Activated CD8-positive, alpha-beta T cell treated with anti-CD3 and anti-CD28 coated beads for 36 hours (primary cell): ENCODE measurements at regions of chr18 and their contacts with region 1.

Region 1: GRCh38 chr18:13216092-13216582 is 2.4 kb upstream of the LDLRAD4 start:
- DNase-seq: peak; percentile 76
- ATAC-seq: peak; percentile 58
- H3K4me3 Mint-ChIP-seq: peak overlapping the region; percentile 73
- H3K27ac Mint-ChIP-seq: peak overlapping the region; percentile 85
- H3K4me1 Mint-ChIP-seq: peaks cover 29% of the 10 kb centered on the region
- H3K27me3 Mint-ChIP-seq: peaks cover 13% of the 10 kb centered on the region
- CTCF ChIP-seq: peak; percentile 78

Region 2: DNA sequence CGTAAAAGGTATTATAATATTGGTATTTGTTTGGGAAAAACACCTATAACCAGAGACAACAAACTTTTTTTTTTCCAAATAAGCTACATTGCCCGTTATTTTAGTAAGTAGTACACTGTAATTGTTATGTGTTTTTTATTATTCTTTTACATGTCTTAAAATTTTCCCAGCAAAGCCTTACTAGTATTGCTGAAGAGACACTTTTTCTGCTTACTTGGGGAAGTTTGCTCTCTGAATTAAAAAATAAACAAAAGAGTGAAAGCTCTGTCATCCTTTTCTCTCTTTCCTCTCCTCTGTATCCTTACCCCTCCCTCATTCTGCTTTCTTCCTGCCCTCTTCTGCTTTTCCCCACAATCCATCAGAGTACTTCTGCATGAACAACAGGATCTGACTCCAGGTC is 23.2 kb before region 1 on chr18:
- CTCF ChIA-PET with region 1: no interaction called
- POLR2A ChIA-PET with region 1: no interaction called
- intact Hi-C with region 1: no loop called
- DNase-seq: no peak
- ATAC-seq: no peak
- H3K4me3 Mint-ChIP-seq: no peak overlapping the region
- H3K27ac Mint-ChIP-seq: no peak overlapping the region
- H3K4me1 Mint-ChIP-seq: peaks cover 2% of the 10 kb centered on the region
- H3K27me3 Mint-ChIP-seq: peaks cover 1% of the 10 kb centered on the region
- CTCF ChIP-seq: no peak

Region 3: DNA sequence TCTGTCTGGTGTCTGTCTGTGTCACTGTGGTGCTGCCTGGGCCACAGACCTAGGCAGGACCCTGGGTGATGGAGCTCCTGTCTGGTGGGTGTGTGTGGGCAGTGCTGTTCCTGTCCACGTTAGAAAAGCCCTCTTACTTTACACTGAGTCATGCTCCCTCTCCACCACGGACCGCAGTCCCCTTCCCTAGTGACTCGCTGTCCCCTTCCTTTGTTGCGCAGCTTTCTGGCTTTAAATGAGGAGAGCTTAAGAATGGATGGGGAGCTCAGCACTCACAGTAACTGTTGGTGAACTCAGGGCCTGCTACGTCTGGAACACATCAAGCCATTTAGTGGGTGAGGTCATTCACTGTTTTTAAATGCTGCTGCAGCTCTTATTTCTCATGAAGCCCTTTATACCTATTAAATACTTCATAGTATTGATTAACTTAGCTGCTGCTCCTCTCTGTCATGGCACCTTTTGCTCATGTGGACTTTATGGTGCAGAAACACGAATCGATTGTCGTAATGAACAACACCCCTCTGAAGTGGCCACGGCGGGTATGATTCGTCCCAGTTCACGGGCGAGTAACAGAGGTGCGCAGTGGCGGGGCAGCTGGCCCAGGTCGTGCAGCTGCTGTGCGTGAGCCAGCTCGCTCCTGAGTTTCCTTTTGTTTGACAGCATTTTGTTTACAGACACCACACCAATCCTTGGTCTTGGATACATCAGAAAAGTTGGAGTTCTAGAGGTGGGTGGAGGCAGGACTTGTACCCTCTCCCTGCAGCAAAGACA is 102.8 kb after region 1 on chr18:
- CTCF ChIA-PET with region 1: interaction called, 11 read pairs
- POLR2A ChIA-PET with region 1: no interaction called
- intact Hi-C with region 1: no loop called
- DNase-seq: peak; percentile 44
- ATAC-seq: peak; percentile 68
- H3K4me3 Mint-ChIP-seq: no peak overlapping the region
- H3K27ac Mint-ChIP-seq: no peak overlapping the region
- H3K4me1 Mint-ChIP-seq: peaks cover 26% of the 10 kb centered on the region
- H3K27me3 Mint-ChIP-seq: no peaks in the 10 kb centered on the region
- CTCF ChIP-seq: no peak

Region 4: GRCh38 chr18:13435596-13436327 is 219.6 kb after region 1 on chr18:
- CTCF ChIA-PET with region 1: interaction called, 12 read pairs
- POLR2A ChIA-PET with region 1: no interaction called
- intact Hi-C with region 1: no loop called
- DNase-seq: peak; percentile 37
- ATAC-seq: peak; percentile 21
- H3K4me3 Mint-ChIP-seq: no peak overlapping the region
- H3K27ac Mint-ChIP-seq: peak overlapping the region; percentile 87
- H3K4me1 Mint-ChIP-seq: peaks cover 57% of the 10 kb centered on the region
- H3K27me3 Mint-ChIP-seq: no peaks in the 10 kb centered on the region
- CTCF ChIP-seq: no peak

Region 5: DNA sequence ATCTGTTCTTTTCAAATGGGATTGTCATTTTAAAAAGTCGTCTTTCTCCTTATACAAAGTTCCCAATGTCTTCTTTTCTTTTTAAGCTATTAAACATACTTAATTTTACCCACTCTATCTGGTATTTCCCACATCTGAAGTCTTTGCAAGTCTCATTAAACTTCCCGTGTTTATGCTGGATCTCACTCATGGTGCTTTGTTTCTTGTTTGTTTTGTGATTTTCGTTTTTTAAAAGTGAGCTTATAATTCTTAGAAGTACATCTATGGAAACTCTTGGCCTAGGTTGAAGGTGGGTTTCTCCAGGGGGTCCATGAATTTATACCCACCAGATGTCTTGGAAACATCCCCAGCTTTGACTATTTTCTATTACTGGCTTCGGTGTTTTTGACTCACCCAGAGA is 302.2 kb after region 1 on chr18:
- CTCF ChIA-PET with region 1: interaction called, 11 read pairs
- POLR2A ChIA-PET with region 1: no interaction called
- intact Hi-C with region 1: no loop called
- DNase-seq: no peak
- ATAC-seq: no peak
- H3K4me3 Mint-ChIP-seq: no peak overlapping the region
- H3K27ac Mint-ChIP-seq: no peak overlapping the region
- H3K4me1 Mint-ChIP-seq: peaks cover 12% of the 10 kb centered on the region
- H3K27me3 Mint-ChIP-seq: no peaks in the 10 kb centered on the region
- CTCF ChIP-seq: no peak

Region 6: DNA sequence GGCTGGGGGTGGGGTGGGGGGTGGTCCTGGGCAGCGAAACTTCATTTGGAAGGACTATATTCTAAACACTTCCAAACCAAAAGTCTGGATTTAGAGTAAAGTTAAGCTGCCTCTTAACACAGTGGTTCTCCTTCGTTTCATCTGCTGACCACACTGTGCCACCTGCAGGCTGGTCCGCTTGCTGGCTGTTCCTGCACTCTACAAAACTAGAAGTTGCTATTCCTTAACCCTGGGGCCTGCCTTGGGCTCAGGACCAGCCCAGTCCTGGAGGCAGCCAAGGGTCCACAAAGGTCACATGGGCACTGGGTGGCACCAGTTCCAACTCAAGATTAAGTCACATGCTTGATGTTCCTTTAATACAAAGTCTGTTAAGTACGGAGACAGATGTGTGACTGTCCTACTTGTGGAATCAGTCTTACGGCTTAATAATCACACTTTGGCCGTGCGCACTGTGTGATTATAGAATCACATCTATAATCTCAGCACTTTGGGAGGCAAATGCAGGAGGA is 314.8 kb after region 1 on chr18:
- CTCF ChIA-PET with region 1: interaction called, 10 read pairs
- POLR2A ChIA-PET with region 1: no interaction called
- intact Hi-C with region 1: loop called (anchors 10 kb)
- DNase-seq: peak; percentile 29
- ATAC-seq: peak; percentile 49
- H3K4me3 Mint-ChIP-seq: no peak overlapping the region
- H3K27ac Mint-ChIP-seq: no peak overlapping the region
- H3K4me1 Mint-ChIP-seq: peaks cover 37% of the 10 kb centered on the region
- H3K27me3 Mint-ChIP-seq: no peaks in the 10 kb centered on the region
- CTCF ChIP-seq: no peak

Region 7: GRCh38 chr18:13611601-13612195 is 395.6 kb after region 1 on chr18:
- CTCF ChIA-PET with region 1: interaction called, 3 read pairs
- POLR2A ChIA-PET with region 1: no interaction called
- intact Hi-C with region 1: loop called (anchors 10 kb)
- DNase-seq: no peak
- ATAC-seq: no peak
- H3K4me3 Mint-ChIP-seq: peak overlapping the region; percentile 76
- H3K27ac Mint-ChIP-seq: peak overlapping the region; percentile 93
- H3K4me1 Mint-ChIP-seq: peaks cover 86% of the 10 kb centered on the region
- H3K27me3 Mint-ChIP-seq: no peaks in the 10 kb centered on the region
- CTCF ChIP-seq: no peak